ENCODE measurements at regions of chr11 and their contacts with region 1.

Region 1: GRCh38 chr11:111878849-111879636 is at the starts of genes CFAP68 and FDXACB1:
- DNase-seq: peak; percentile 96 to 99 (median 98)
- H3K4me3 ChIP-seq: peak within 1 kb of the TSS; percentile 21 to 90 (median 42)
- H3K27ac ChIP-seq: peak within 1 kb of the TSS; percentile 78 to 99 (median 93)
- H3K4me1 ChIP-seq: peaks cover 17 to 21% of the 10 kb centered on the region in 2 donors
- H3K27me3 ChIP-seq: no peaks in the 10 kb centered on the region
- CTCF ChIP-seq: peak; percentile 82 to 99 (median 98)
- POLR2A ChIP-seq: peak; percentile 57 to 58
- total RNA-seq, gene CFAP68: 26.6 to 60.7 (median 37.3) TPM
- total RNA-seq, gene FDXACB1: 2.3 to 6.3 (median 3.9) TPM

Region 2: DNA sequence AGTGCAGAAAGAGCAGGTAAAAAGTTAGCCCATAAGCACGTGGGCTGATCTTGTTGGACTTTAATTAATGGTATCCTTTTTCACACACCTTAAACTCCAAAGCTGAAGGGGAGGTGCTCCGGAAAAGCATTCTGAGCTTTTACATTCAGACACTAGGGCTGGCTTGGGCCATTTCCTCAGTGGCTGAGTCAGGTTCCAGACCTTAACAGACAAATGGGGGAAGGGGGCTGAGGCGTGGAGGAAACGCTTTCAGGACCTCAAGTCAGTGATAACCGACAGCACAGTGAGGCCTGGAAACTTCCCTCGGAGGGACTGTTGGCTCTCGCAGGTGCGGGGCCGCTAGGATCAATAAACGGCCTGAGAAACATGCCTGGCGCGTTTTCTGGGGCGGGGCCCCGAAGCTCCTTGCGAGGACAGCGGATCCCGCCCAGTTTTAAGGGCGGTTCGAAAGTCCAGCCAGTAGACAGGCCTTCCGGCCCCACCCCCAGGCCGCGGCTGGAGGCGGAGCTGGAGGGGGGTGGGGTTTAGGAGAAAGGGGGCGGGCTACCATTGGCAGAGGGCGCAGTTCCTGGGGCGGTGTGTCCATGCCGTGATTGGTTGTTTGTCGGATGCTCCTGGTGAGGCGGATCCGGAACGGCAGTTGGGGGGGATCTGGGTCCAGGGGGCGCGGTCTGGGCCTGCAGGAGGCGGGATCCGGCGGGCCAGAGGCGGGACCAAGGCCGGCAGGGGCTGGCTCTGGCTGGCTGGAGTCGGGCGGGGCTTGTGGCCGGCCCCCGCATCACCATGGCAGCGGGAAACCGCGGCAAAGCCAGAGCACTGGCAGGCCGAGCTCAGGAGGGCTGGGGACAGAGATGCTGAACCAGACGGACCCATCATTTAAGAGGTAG is 47.7 kb after region 1 on chr11:
- intact Hi-C with region 1: loop called in 1 of 2 experiments (anchors 10 kb)
- DNase-seq: peak; percentile 96 to 98 (median 97)
- H3K4me3 ChIP-seq: peak overlapping the region in 2 of 4 donors; percentile 38 to 58
- H3K27ac ChIP-seq: peak overlapping the region; percentile 34 to 95 (median 87)
- H3K4me1 ChIP-seq: peaks cover 15 to 28% of the 10 kb centered on the region in 2 donors
- H3K27me3 ChIP-seq: no peaks in the 10 kb centered on the region
- CTCF ChIP-seq: peak in 4 of 6 experiments; percentile 16 to 47 (median 34)
- POLR2A ChIP-seq: peak; percentile 44 to 77

Region 3: DNA sequence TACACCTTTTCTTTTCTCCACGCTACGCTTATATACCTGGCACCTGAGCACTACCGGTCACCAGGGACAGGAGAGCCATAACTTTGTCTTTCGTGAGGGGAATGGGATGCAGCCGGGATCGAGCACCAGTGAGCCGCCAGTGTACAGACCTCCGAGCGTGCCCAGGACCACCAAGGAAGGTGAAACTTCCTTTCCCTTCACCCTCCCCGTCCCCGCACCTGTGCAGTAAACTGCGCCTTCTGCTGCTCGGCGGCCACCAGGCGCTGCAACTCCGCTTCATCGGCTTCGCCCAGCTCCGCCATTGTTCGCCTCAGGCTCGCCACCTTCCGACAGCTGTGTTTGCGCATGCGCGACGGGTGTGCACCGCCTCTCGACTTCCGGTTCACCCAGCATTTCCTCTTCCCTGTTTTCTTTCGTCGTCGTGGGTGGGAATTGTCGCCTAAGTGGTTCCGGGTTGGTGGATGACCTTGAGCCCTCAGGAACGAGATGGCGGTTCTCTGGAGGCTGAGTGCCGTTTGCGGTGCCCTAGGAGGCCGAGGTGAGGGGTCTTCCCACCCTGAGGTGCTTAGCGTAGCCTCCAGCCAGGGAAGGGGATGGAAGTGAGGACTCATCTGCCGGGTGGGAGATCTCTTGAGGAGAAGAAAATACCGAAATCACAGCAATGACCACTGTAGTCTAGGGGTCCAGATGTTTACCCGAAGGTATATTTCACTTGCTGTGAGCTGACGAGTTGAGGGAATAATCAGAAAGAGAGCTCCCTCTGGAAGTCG is 207.6 kb after region 1 on chr11 and contains the starts of genes SDHD and TIMM8B:
- intact Hi-C with region 1: loop called in 1 of 2 experiments (anchors 10 kb)
- DNase-seq: peak; percentile 95 to 98 (median 97)
- H3K4me3 ChIP-seq: peak within 1 kb of the TSS; percentile 33 to 67 (median 65)
- H3K27ac ChIP-seq: peak within 1 kb of the TSS in 4 of 5 donors; percentile 41 to 87 (median 72)
- H3K4me1 ChIP-seq: peaks cover 17 to 40% of the 10 kb centered on the region in 2 donors
- H3K27me3 ChIP-seq: no peaks in the 10 kb centered on the region
- CTCF ChIP-seq: peak in 3 of 6 experiments; percentile 26 to 52 (median 48)
- POLR2A ChIP-seq: peak in 1 of 2 donors; percentile 65
- total RNA-seq, gene SDHD: 66.8 to 149 (median 119) TPM
- total RNA-seq, gene TIMM8B: 23.8 to 304 (median 67.0) TPM

Measured in adrenal gland (tissue), 19 donors.